ENCODE measurements at regions of chr17 and their contacts with region 1.

Region 1: GRCh38 chr17:40909351-40909750 is 24.3 kb upstream of the KRT20 start:
- DNase-seq: peak; percentile 80 to 90
- H3K4me3 ChIP-seq: no peak overlapping the region
- H3K27ac ChIP-seq: no peak overlapping the region
- H3K4me1 ChIP-seq: peaks cover 0 to 6% of the 10 kb centered on the region in 2 donors
- H3K27me3 ChIP-seq: no peaks in the 10 kb centered on the region
- CTCF ChIP-seq: peak; percentile 16 to 88 (median 76)
- POLR2A ChIP-seq: no peak

Region 2: DNA sequence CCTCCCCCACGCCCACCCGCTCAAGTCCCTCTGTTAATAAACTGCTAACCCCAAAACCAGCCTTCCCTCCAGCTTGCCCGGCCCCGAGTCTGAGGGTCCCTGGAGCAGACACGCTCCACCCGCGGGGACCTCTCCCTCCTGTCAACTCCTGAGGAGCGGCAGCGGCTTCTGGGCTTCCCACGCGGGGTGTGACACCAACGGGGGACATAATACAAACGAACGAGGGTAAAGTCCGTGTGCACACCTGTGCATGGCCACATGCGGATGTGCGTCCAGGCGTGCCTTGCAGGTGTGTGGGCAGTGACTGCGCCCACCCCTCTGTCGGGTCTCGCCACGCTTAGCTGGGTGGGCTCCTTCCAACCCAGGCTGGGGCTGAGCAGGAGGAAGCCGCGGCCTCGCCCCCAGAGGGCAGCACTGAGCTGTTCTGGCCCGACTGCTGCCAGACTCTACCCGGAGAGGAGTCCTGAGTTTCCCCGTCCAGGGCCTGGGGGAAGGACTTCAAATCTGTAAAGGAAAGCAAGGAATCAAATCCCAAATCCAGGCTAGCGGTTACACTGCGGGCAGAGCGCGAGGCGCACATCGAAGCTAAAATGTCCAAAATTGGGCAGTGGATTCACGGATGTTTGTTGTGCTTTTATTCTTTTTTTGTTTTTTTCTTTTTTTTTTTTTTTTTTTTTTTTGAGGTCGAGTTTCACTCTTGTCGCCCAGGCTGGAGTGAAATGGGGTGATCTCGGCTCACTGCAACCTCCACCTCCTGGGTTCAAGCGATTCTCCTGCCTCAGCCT is 739.3 kb after region 1 on chr17:
- intact Hi-C with region 1: loop called (anchors 5 kb)
- DNase-seq: peak; percentile 87 to 91
- H3K4me3 ChIP-seq: peak overlapping the region in 1 of 3 donors; percentile 12
- H3K27ac ChIP-seq: peak overlapping the region; percentile 24 to 64 (median 42)
- H3K4me1 ChIP-seq: peaks cover 26 to 38% of the 10 kb centered on the region in 2 donors
- H3K27me3 ChIP-seq: no peaks in the 10 kb centered on the region
- CTCF ChIP-seq: peak; percentile 81 to 97 (median 94)
- POLR2A ChIP-seq: peak in 1 of 2 donors; percentile 8